ENCODE measurements at regions of chr19 and their contacts with region 1.

Region 1: DNA sequence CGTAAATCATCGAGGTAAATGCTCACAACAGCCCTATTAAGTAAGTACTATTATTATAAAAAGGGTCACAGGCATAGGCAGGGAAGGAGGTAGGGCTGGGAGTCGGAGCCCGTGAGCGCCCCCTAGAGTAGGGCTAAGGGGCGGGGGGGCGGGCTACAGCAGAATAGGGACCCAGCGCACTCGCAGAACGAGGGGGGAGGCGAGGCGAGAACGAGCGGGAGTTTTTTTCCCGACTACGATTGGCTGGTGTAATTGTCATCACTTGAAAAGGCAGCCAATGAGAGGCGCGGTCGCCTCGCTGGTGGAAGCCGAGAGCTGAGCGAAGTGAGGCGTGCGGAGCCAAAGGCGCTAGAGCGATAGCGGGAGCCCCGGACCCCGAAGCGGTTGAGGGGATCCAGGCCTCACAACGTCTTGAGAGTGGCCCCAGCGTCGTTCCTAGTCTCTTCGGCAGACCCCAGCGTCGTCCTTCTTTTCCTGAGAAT is 24.2 kb downstream of the KEAP1 start:
- DNase-seq: peak; percentile 91 to 98 (median 96)
- H3K4me3 ChIP-seq: peak overlapping the region; percentile 35 to 76 (median 61)
- H3K27ac ChIP-seq: peak overlapping the region in 40 of 59 donors; percentile 4 to 85 (median 50)
- H3K27me3 ChIP-seq: no peaks in the 10 kb centered on the region
- CTCF ChIP-seq: peak; percentile 72 to 97 (median 88)

Region 2: GRCh38 chr19:10408511-10409283 is 70.2 kb before region 1 on chr19:
- intact Hi-C with region 1: loop called in 1 of 2 experiments (anchors 5 kb)
- DNase-seq: peak in 3 of 10 donors; percentile 38 to 45 (median 45)
- H3K4me3 ChIP-seq: peak overlapping the region in 3 of 59 donors; percentile 8 to 25 (median 17)
- H3K27ac ChIP-seq: peak overlapping the region in 36 of 59 donors; percentile 0 to 75 (median 46)
- H3K27me3 ChIP-seq: peaks cover 0 to 8% (median 0%) of the 10 kb centered on the region in 45 donors
- CTCF ChIP-seq: no peak

Region 3: GRCh38 chr19:10420444-10421239 is 58.3 kb before region 1 on chr19 and contains the start of gene PDE4A:
- intact Hi-C with region 1: no loop called
- DNase-seq: no peak
- H3K4me3 ChIP-seq: peak within 1 kb of the TSS in 58 of 59 donors; percentile 11 to 65 (median 48)
- H3K27ac ChIP-seq: peak within 1 kb of the TSS in 25 of 59 donors; percentile 18 to 85 (median 48)
- H3K27me3 ChIP-seq: peaks cover 0 to 85% (median 42%) of the 10 kb centered on the region in 45 donors
- CTCF ChIP-seq: peak in 27 of 56 donors; percentile 8 to 51 (median 23)
- total RNA-seq, gene PDE4A: 23.3 to 88.7 (median 59.0) TPM

Region 4: DNA sequence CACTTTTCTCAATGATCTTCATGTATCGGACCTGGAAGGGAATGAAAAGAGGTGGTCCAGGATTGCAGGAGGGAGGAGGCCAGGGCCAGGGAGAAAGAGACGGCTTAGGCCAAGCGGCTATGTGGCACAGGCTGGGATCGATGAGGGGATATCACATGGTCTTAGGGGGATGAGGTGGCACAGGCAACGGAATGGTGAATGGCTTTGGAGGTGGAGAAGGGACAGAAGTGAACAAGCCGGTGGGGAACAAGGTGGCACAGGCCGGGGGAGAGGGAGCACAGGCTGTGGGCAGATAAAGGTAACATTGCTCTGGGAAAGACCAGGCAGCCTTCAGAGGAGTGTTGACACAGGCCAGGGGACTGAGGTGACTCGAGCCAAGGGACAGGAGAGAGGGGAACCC is 95.5 kb after region 1 on chr19:
- intact Hi-C with region 1: loop called in 1 of 2 experiments (anchors 5 kb)
- DNase-seq: no peak
- H3K4me3 ChIP-seq: no peak overlapping the region
- H3K27ac ChIP-seq: no peak overlapping the region
- H3K27me3 ChIP-seq: no peaks in the 10 kb centered on the region
- CTCF ChIP-seq: no peak

Region 5: DNA sequence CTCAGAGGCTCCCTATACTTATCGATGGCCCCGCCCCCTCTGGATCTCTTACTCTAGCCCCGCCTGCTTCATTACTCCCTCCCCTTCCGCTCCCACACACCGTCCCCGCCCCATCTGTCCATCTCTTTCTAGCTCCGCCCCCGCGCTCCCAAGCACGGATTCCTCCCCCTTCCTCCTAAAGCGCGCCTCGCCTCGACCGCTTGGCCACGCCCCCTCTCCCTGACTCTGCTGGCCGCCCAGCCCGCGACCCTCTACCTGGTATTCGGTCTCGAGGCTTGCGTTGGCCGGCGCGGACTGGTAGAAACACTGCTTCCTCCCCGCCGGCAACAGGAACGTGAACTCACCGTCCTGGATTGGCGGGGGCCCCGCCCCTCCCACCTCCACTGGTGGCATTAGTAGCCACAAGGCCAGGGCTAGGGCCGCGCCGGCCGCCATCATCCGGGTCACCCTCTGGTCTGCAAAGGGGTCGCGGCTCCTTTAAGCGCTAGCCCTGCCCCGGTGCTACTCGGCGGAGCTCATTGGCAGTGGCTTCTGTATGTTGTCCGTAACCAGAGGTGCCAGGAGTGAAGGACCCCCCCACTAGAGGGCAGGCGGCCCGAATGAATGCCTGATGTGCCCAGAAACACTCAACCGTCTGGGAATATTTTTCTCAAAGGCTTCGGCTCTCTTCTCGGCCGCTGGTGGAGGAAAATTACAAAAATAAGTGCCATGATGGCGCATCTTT is 357.0 kb after region 1 on chr19 and contains the start of gene TMED1:
- intact Hi-C with region 1: no loop called
- DNase-seq: peak; percentile 94 to 100 (median 99)
- H3K4me3 ChIP-seq: peak within 1 kb of the TSS; percentile 58 to 97 (median 83)
- H3K27ac ChIP-seq: peak within 1 kb of the TSS; percentile 88 to 100 (median 99)
- H3K27me3 ChIP-seq: no peaks in the 10 kb centered on the region
- CTCF ChIP-seq: peak in 53 of 56 donors; percentile 27 to 77 (median 49)
- total RNA-seq, gene TMED1: 7.7 to 25.1 (median 13.0) TPM